ENCODE measurements at regions of chr5 and their contacts with region 1.

Region 1: GRCh38 chr5:103258368-103258956 is at the start of gene MACIR:
- DNase-seq: peak; percentile 96
- ATAC-seq: peak; percentile 94
- H3K4me3 ChIP-seq: peak within 1 kb of the TSS; percentile 57 to 91 (median 80)
- H3K4me3 Mint-ChIP-seq: peak within 1 kb of the TSS; percentile 93
- H3K27ac ChIP-seq: peak within 1 kb of the TSS; percentile 41 to 50
- H3K27ac Mint-ChIP-seq: peak within 1 kb of the TSS; percentile 91
- H3K4me1 ChIP-seq: peaks cover 8 to 12% of the 10 kb centered on the region in 2 donors
- H3K4me1 Mint-ChIP-seq: peaks cover 19% of the 10 kb centered on the region
- H3K27me3 ChIP-seq: peaks cover 0 to 7% (median 2%) of the 10 kb centered on the region in 4 experiments
- H3K27me3 Mint-ChIP-seq: peaks cover 10% of the 10 kb centered on the region
- CTCF ChIP-seq: no peak
- total RNA-seq, gene MACIR: 3.0 and 3.3 TPM in 2 replicates

Region 2: DNA sequence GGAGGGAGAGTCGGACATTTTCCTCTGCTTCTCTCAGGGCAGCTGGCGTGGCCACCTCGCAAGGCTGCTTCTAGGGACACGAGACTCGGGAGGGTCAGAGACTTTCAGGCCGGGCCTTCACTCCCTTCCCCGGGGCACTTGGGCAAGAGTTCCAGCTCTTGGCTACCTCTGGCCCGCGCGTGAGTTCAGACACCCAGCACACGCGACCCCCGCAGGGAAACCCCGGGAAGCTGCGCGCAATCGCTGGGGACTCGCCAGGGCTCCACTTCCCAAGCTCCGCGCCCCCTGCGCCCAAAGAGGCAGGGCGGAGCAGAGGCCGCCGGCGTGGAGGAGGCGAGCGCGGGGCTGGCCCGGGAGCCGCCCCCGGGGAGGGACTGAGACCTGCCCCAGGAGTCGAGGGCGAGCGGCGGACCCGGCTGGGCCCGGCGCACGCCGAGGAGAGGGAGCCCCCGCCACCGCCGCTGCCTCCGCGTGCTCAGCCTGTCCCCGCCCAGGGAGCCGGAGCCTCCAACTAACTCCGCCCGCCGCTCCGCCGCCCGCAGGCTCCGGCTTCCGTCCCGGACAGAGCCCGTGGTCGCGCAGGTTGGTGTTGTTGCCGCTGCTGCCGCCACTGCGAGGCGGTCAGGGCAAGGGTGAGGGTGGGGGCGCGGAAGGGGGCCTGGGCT is 503.6 kb before region 1 on chr5 and contains the start of gene PAM:
- CTCF ChIA-PET with region 1: no interaction called
- POLR2A ChIA-PET with region 1: no interaction called
- intact Hi-C with region 1: loop called (anchors 5 kb)
- DNase-seq: peak; percentile 74
- ATAC-seq: peak; percentile 67
- H3K4me3 ChIP-seq: peak within 1 kb of the TSS; percentile 57 to 74 (median 69)
- H3K4me3 Mint-ChIP-seq: peak within 1 kb of the TSS; percentile 97
- H3K27ac ChIP-seq: peak within 1 kb of the TSS; percentile 29 to 55
- H3K27ac Mint-ChIP-seq: peak within 1 kb of the TSS; percentile 91
- H3K4me1 ChIP-seq: peaks cover 16 to 23% of the 10 kb centered on the region in 2 donors
- H3K4me1 Mint-ChIP-seq: peaks cover 26% of the 10 kb centered on the region
- H3K27me3 ChIP-seq: peaks cover 0 to 24% (median 7%) of the 10 kb centered on the region in 4 experiments
- H3K27me3 Mint-ChIP-seq: peaks cover 19% of the 10 kb centered on the region
- CTCF ChIP-seq: no peak
- total RNA-seq, gene PAM: 34.8 and 37.2 TPM in 2 replicates

Region 3: GRCh38 chr5:103119765-103120606 is 138.5 kb before region 1 on chr5 and contains the starts of genes GIN1 and PPIP5K2:
- CTCF ChIA-PET with region 1: interaction called, 9 read pairs
- POLR2A ChIA-PET with region 1: interaction called, 12 read pairs
- intact Hi-C with region 1: loop called (anchors 1 kb)
- DNase-seq: peak; percentile 98
- ATAC-seq: peak; percentile 91
- H3K4me3 ChIP-seq: peak within 1 kb of the TSS; percentile 77 to 96 (median 91)
- H3K4me3 Mint-ChIP-seq: peak within 1 kb of the TSS; percentile 93
- H3K27ac ChIP-seq: peak within 1 kb of the TSS; percentile 92 to 96
- H3K27ac Mint-ChIP-seq: peak within 1 kb of the TSS; percentile 98
- H3K4me1 ChIP-seq: peaks cover 13 to 30% of the 10 kb centered on the region in 2 donors
- H3K4me1 Mint-ChIP-seq: peaks cover 49% of the 10 kb centered on the region
- H3K27me3 ChIP-seq: no peaks in the 10 kb centered on the region
- H3K27me3 Mint-ChIP-seq: no peaks in the 10 kb centered on the region
- CTCF ChIP-seq: no peak
- total RNA-seq, gene GIN1: 12.6 and 16.9 TPM in 2 replicates
- total RNA-seq, gene PPIP5K2: 77.9 and 80.5 TPM in 2 replicates

Region 4: GRCh38 chr5:103211576-103212561 is 46.6 kb before region 1 on chr5:
- CTCF ChIA-PET with region 1: no interaction called
- POLR2A ChIA-PET with region 1: interaction called, 6 read pairs
- intact Hi-C with region 1: loop called (anchors 5 kb)
- DNase-seq: peak; percentile 42
- ATAC-seq: no peak
- H3K4me3 ChIP-seq: peak overlapping the region in 3 of 5 experiments; percentile 18 to 51 (median 19)
- H3K4me3 Mint-ChIP-seq: peak overlapping the region; percentile 41
- H3K27ac ChIP-seq: peak overlapping the region in 1 of 2 donors; percentile 23
- H3K27ac Mint-ChIP-seq: peak overlapping the region; percentile 8
- H3K4me1 ChIP-seq: peaks cover 5 to 11% of the 10 kb centered on the region in 2 donors
- H3K4me1 Mint-ChIP-seq: peaks cover 26% of the 10 kb centered on the region
- H3K27me3 ChIP-seq: no peaks in the 10 kb centered on the region
- H3K27me3 Mint-ChIP-seq: no peaks in the 10 kb centered on the region
- CTCF ChIP-seq: no peak

Region 5: GRCh38 chr5:103232393-103232999 is 26.0 kb before region 1 on chr5:
- CTCF ChIA-PET with region 1: interaction called, 11 read pairs
- POLR2A ChIA-PET with region 1: no interaction called
- intact Hi-C with region 1: no loop called
- DNase-seq: peak; percentile 36
- ATAC-seq: peak; percentile 43
- H3K4me3 ChIP-seq: no peak overlapping the region
- H3K4me3 Mint-ChIP-seq: no peak overlapping the region
- H3K27ac ChIP-seq: no peak overlapping the region
- H3K27ac Mint-ChIP-seq: no peak overlapping the region
- H3K4me1 ChIP-seq: no peaks in the 10 kb centered on the region
- H3K4me1 Mint-ChIP-seq: no peaks in the 10 kb centered on the region
- H3K27me3 ChIP-seq: no peaks in the 10 kb centered on the region
- H3K27me3 Mint-ChIP-seq: peaks cover 8% of the 10 kb centered on the region
- CTCF ChIP-seq: peak; percentile 80

Region 6: GRCh38 chr5:103562453-103563157 is 304.1 kb after region 1 on chr5 and contains the start of gene NUDT12:
- CTCF ChIA-PET with region 1: no interaction called
- POLR2A ChIA-PET with region 1: no interaction called
- intact Hi-C with region 1: loop called (anchors 2 kb)
- DNase-seq: peak; percentile 69
- ATAC-seq: peak; percentile 88
- H3K4me3 ChIP-seq: peak within 1 kb of the TSS; percentile 56 to 69 (median 62)
- H3K4me3 Mint-ChIP-seq: peak within 1 kb of the TSS; percentile 98
- H3K27ac ChIP-seq: peak within 1 kb of the TSS in 1 of 2 donors; percentile 68
- H3K27ac Mint-ChIP-seq: peak within 1 kb of the TSS; percentile 89
- H3K4me1 ChIP-seq: peaks cover 8 to 9% of the 10 kb centered on the region in 2 donors
- H3K4me1 Mint-ChIP-seq: peaks cover 17% of the 10 kb centered on the region
- H3K27me3 ChIP-seq: no peaks in the 10 kb centered on the region
- H3K27me3 Mint-ChIP-seq: peaks cover 7% of the 10 kb centered on the region
- CTCF ChIP-seq: no peak
- total RNA-seq, gene NUDT12: 2.6 and 3.5 TPM in 2 replicates

Measured in B cell (primary cell).